Mammary epithelial cell (primary cell): ENCODE measurements at regions of chr18 and their contacts with region 1.

Region 1: DNA sequence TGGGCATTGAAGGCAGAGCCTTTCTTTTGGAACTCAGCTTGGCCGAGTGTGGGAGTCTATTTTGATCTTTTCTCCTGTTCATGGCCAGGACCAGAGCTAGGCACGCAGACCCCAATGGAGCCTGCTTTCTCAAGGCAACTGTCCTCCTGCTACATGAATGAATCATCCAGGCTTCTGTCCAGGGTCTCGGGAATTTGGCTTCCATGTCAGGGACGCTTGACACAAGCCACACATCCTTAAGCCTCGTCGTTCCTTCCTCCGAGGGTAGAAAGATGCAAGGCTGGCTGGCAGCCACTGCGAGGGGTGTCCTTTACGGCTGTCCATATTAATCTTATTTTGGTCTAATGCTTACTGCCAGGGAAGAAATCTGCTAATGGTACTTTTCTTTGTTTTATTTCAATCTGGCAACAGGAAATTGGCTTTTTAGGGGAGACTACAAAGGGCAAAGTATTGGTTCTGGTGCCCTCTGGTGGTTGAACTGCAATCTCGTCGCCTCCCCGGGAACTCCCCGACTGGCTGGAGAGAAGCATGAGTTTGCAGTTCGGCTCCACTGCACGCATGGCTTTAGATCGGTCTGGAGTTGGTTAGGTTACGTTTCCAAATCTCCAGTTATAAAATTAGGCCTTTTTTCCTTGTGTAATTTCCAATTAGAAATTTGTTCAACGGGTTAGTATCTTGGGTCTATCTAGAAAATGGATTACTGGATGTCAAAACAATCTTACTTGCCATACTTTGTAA is 135.2 kb downstream of the ALPK2 start:
- DNase-seq: peak; percentile 58
- H3K4me3 ChIP-seq: no peak overlapping the region
- H3K27ac ChIP-seq: no peak overlapping the region
- H3K4me1 ChIP-seq: peaks cover 8% of the 10 kb centered on the region
- H3K27me3 ChIP-seq: no peaks in the 10 kb centered on the region
- CTCF ChIP-seq: peak; percentile 79 to 91

Region 2: DNA sequence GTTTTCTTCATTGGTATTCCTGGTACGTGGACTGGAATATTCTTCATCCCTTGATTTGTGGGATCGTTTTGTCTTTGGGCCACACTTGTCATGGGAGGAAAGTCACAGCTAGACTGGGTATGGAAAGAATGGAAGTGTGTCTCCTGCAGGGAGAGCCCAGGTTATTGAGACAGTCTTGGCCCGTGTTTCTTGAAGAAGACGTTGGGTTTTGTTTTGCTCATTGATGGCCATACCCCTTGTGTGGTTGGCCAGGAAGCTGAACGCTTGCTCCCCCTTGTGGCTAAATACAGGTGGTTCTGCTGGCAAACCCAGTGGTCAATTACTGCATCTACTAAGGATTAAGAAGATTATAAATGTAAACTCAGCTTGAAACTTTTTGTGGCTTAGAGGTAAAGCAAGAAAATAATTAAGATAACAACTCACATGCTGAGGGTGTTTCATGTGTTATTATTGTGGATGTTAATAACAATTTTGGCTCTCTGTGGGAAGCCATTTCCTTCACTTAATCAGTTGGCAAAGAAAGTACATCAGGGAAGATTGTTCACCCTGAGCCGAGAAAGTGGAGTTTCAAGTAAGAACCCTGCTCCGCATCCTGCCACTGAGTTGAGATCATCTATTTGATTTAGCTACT is 357.9 kb before region 1 on chr18:
- CTCF ChIA-PET with region 1: no interaction called
- dilution Hi-C with region 1: no loop called
- in situ Hi-C with region 1: no loop called
- intact Hi-C with region 1: loop called (anchors 5 kb)
- DNase-seq: peak; percentile 52
- H3K4me3 ChIP-seq: no peak overlapping the region
- H3K27ac ChIP-seq: no peak overlapping the region
- H3K4me1 ChIP-seq: peaks cover 11% of the 10 kb centered on the region
- H3K27me3 ChIP-seq: no peaks in the 10 kb centered on the region
- CTCF ChIP-seq: peak; percentile 90 to 98

Region 3: GRCh38 chr18:58394602-58395425 is 98.9 kb before region 1 on chr18:
- CTCF ChIA-PET with region 1: no interaction called
- dilution Hi-C with region 1: no loop called
- in situ Hi-C with region 1: loop called in 1 of 2 experiments (anchors 5 kb)
- intact Hi-C with region 1: loop called (anchors 1 kb)
- DNase-seq: peak; percentile 32
- H3K4me3 ChIP-seq: no peak overlapping the region
- H3K27ac ChIP-seq: no peak overlapping the region
- H3K4me1 ChIP-seq: no peaks in the 10 kb centered on the region
- H3K27me3 ChIP-seq: no peaks in the 10 kb centered on the region
- CTCF ChIP-seq: no peak

Region 4: DNA sequence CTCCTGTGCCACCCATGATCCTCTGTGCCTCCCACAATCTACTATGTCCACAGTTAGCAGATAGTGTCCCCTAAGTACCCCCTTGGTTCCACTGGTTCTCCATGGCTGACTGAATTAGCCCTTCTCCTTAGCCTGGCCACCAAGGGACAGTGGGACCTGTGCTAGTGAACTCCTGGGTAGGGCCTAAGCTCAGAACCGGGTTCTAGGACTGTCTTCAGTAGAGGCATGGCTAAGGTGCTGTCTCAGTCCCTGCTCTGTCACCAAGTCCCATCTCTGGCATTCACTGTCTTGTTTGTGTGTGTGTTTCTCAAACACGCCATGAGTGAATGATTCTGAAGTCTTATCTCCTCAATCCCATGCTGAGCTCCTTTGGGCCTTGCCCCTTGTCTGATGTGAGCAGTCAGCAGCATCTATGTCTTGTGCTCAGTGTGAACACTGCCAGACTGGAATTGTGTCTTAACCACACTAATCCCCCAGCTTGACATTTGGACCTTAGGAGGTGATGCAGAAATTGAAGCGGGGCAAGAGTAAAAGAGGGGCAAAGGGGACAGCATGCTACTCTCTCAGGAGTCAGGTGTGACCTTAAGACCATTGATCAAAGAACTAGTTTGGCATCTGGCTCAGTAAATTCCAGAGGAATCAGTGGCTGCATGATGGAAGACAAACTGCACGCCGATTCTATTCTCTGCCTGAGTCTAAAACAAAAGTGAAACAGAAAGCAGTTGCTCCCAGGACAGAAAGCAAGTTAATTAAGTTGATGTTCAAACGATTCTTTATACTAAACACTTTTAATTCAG is 55.3 kb before region 1 on chr18:
- CTCF ChIA-PET with region 1: no interaction called
- dilution Hi-C with region 1: no loop called
- in situ Hi-C with region 1: no loop called
- intact Hi-C with region 1: loop called (anchors 2 kb)
- DNase-seq: peak; percentile 16
- H3K4me3 ChIP-seq: no peak overlapping the region
- H3K27ac ChIP-seq: no peak overlapping the region
- H3K4me1 ChIP-seq: no peaks in the 10 kb centered on the region
- H3K27me3 ChIP-seq: no peaks in the 10 kb centered on the region
- CTCF ChIP-seq: no peak

Region 5: DNA sequence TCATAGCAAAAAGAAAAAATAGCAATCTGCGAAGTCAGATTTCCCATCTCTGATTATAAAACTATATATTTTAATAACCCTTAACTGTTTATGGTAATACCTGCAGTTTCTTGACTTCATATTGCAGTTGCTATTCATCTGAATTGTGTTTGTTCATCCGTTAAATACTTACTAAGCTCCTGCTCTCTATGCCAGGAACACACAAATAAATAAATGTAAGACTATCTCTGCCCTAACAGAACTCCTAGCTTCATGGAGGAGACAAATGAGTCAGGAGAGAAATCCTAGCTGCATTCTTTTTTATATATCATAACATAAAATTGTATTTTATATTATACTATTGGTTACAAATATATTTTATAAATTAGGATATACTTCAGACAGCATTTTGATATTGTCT is 238.8 kb after region 1 on chr18:
- CTCF ChIA-PET with region 1: no interaction called
- dilution Hi-C with region 1: no loop called
- in situ Hi-C with region 1: no loop called
- intact Hi-C with region 1: no loop called
- DNase-seq: no peak
- H3K4me3 ChIP-seq: no peak overlapping the region
- H3K27ac ChIP-seq: no peak overlapping the region
- H3K4me1 ChIP-seq: no peaks in the 10 kb centered on the region
- H3K27me3 ChIP-seq: no peaks in the 10 kb centered on the region
- CTCF ChIP-seq: no peak

Region 6: DNA sequence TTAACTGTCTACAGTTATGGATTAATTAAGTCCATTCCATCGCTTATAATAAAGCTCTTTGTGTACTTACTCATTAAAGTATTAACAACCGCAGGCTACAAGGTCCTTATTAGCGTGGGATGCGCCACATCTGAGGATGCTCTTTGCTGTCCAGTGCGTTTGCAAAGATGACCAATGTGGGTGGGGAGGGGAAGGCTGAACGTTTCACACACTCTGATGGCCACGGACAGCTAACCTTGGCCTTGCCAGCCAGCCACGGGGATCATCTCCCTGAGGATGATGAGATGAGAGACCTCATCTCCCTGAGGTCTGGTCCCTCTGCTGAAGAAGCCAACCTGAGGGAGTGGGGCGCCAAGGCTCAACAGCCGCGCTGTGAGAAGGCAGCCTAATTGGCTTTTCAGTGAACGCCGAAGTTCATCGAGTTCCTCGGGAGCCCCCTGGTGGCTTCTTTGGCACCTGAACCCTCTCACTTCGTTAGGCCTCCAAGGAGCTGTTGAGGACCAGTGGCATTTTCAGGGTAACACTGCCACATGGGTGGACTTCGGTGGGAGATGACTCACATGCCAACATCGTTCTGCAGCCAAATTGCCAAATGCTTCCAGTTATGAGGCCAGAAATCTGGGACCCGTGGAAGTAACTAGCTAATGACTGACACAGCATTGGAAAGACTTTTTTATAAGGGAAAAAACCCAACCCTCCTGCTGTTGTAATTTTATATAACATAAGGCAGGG is 576.7 kb after region 1 on chr18:
- CTCF ChIA-PET with region 1: no interaction called
- dilution Hi-C with region 1: no loop called
- in situ Hi-C with region 1: loop called in 1 of 2 experiments (anchors 25 kb)
- intact Hi-C with region 1: no loop called
- DNase-seq: peak; percentile 67
- H3K4me3 ChIP-seq: no peak overlapping the region
- H3K27ac ChIP-seq: no peak overlapping the region
- H3K4me1 ChIP-seq: peaks cover 3% of the 10 kb centered on the region
- H3K27me3 ChIP-seq: no peaks in the 10 kb centered on the region
- CTCF ChIP-seq: peak; percentile 86 to 88